Esophagus squamous epithelium (tissue), 5 donors: ENCODE measurements at regions of chr1 and their contacts with region 1.

Region 1: GRCh38 chr1:6624710-6625583 is at the start of gene THAP3:
- DNase-seq: peak; percentile 47
- H3K4me3 ChIP-seq: peak within 1 kb of the TSS; percentile 66 to 95 (median 74)
- H3K27ac ChIP-seq: peak within 1 kb of the TSS; percentile 85 to 95 (median 91)
- H3K4me1 ChIP-seq: peaks cover 11 to 36% (median 13%) of the 10 kb centered on the region in 3 donors
- H3K27me3 ChIP-seq: no peaks in the 10 kb centered on the region
- CTCF ChIP-seq: no peak
- POLR2A ChIP-seq: peak in 1 of 4 donors; percentile 40
- total RNA-seq, gene THAP3: 4.8 to 17.1 (median 13.3) TPM

Region 2: GRCh38 chr1:6313393-6314209 is 311.3 kb before region 1 on chr1:
- intact Hi-C with region 1: no loop called
- DNase-seq: no peak
- H3K4me3 ChIP-seq: no peak overlapping the region
- H3K27ac ChIP-seq: no peak overlapping the region
- H3K4me1 ChIP-seq: no peaks in the 10 kb centered on the region
- H3K27me3 ChIP-seq: no peaks in the 10 kb centered on the region
- CTCF ChIP-seq: no peak
- POLR2A ChIP-seq: no peak

Region 3: GRCh38 chr1:6554031-6554906 is 70.7 kb before region 1 on chr1 and contains the start of gene NOL9:
- intact Hi-C with region 1: loop called (anchors 10 kb)
- DNase-seq: peak; percentile 58
- H3K4me3 ChIP-seq: peak within 1 kb of the TSS; percentile 87 to 100 (median 99)
- H3K27ac ChIP-seq: peak within 1 kb of the TSS; percentile 79 to 91 (median 86)
- H3K4me1 ChIP-seq: peaks cover 16 to 32% (median 23%) of the 10 kb centered on the region in 3 donors
- H3K27me3 ChIP-seq: no peaks in the 10 kb centered on the region
- CTCF ChIP-seq: peak; percentile 95 to 98 (median 97)
- POLR2A ChIP-seq: peak in 2 of 4 donors; percentile 26 to 34
- total RNA-seq, gene NOL9: 13.0 to 36.4 (median 22.3) TPM

Region 4: GRCh38 chr1:6935361-6935883 is 310.5 kb after region 1 on chr1:
- intact Hi-C with region 1: no loop called
- DNase-seq: no peak
- H3K4me3 ChIP-seq: peak overlapping the region in 1 of 4 donors; percentile 21
- H3K27ac ChIP-seq: no peak overlapping the region
- H3K4me1 ChIP-seq: peaks cover 0 to 17% (median 0%) of the 10 kb centered on the region in 3 donors
- H3K27me3 ChIP-seq: peaks cover 0 to 65% (median 0%) of the 10 kb centered on the region in 4 donors
- CTCF ChIP-seq: no peak
- POLR2A ChIP-seq: no peak